ENCODE measurements at regions of chr20 and their contacts with region 1.

Region 1: GRCh38 chr20:17504898-17505635 is 26.1 kb downstream of the BFSP1 start:
- DNase-seq: peak; percentile 74
- H3K4me3 Mint-ChIP-seq: peak overlapping the region; percentile 74
- H3K27ac Mint-ChIP-seq: peak overlapping the region; percentile 65
- H3K4me1 Mint-ChIP-seq: peaks cover 17% of the 10 kb centered on the region
- H3K27me3 Mint-ChIP-seq: no peaks in the 10 kb centered on the region
- CTCF ChIP-seq: peak; percentile 50

Region 2: GRCh38 chr20:17137692-17138091 is 367.4 kb before region 1 on chr20:
- CTCF ChIA-PET with region 1: no interaction called
- POLR2A ChIA-PET with region 1: no interaction called
- intact Hi-C with region 1: no loop called
- DNase-seq: no peak
- H3K4me3 Mint-ChIP-seq: no peak overlapping the region
- H3K27ac Mint-ChIP-seq: no peak overlapping the region
- H3K4me1 Mint-ChIP-seq: no peaks in the 10 kb centered on the region
- H3K27me3 Mint-ChIP-seq: no peaks in the 10 kb centered on the region
- CTCF ChIP-seq: no peak

Region 3: DNA sequence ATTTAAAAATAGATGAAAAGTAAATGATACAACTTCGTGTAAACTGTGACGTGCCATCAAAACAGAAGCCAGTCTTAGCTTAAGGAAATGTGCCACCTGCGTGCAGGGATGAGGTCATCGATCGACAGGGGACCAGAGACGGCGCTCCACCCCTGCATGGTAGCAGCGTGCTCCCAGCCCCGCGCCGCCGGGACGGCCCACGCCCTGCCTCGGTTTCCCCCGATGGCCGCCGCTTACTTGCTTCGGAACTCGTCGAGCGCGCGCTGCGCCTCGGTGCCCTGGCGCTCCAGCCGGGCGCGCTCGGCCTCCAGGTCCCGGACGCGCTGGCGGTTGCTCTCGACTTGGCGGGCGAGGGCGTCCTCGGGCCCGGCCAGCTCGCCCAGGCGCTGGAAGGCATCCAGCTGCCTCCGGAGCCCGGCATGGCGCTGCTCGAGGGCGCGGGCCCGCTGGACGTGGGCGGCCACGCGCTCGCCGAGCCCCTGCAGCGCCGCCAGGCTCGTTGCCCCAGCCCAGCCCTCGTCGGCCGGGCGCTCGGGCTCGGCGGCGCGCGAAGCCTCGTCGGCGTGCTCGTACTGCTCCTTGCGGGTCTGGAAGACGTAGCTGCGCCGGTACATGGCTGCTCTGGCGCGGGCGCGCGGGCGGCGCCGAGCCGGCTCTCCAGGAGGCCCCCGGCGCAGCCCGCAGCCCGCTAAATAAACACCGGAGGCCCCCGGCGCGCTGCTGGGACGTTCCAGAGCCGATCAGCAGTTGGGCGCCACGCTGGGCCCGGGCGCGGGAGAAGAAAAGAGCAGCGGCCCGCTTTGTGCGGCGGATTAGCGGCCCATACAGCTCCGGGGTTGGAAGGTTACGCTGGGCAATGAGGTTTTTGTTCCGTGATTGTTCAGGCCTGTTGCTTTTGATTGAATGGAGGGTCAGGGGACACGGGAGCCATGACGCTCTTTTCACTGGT is 25.9 kb after region 1 on chr20 and contains the start of gene BFSP1:
- CTCF ChIA-PET with region 1: interaction called, 39 read pairs
- POLR2A ChIA-PET with region 1: interaction called, 7 read pairs
- intact Hi-C with region 1: loop called (anchors 2 kb)
- DNase-seq: peak; percentile 38
- H3K4me3 Mint-ChIP-seq: peak within 1 kb of the TSS; percentile 69
- H3K27ac Mint-ChIP-seq: no peak within 1 kb of the TSS
- H3K4me1 Mint-ChIP-seq: no peaks in the 10 kb centered on the region
- H3K27me3 Mint-ChIP-seq: no peaks in the 10 kb centered on the region
- CTCF ChIP-seq: no peak
- total RNA-seq, gene BFSP1: 3.5 and 3.9 TPM in 2 replicates

Region 4: GRCh38 chr20:17558154-17558940 is 53.3 kb after region 1 on chr20:
- CTCF ChIA-PET with region 1: interaction called, 11 read pairs
- POLR2A ChIA-PET with region 1: interaction called, 10 read pairs
- intact Hi-C with region 1: no loop called
- DNase-seq: peak; percentile 89
- H3K4me3 Mint-ChIP-seq: peak overlapping the region; percentile 64
- H3K27ac Mint-ChIP-seq: peak overlapping the region; percentile 97
- H3K4me1 Mint-ChIP-seq: peaks cover 36% of the 10 kb centered on the region
- H3K27me3 Mint-ChIP-seq: no peaks in the 10 kb centered on the region
- CTCF ChIP-seq: no peak

Region 5: DNA sequence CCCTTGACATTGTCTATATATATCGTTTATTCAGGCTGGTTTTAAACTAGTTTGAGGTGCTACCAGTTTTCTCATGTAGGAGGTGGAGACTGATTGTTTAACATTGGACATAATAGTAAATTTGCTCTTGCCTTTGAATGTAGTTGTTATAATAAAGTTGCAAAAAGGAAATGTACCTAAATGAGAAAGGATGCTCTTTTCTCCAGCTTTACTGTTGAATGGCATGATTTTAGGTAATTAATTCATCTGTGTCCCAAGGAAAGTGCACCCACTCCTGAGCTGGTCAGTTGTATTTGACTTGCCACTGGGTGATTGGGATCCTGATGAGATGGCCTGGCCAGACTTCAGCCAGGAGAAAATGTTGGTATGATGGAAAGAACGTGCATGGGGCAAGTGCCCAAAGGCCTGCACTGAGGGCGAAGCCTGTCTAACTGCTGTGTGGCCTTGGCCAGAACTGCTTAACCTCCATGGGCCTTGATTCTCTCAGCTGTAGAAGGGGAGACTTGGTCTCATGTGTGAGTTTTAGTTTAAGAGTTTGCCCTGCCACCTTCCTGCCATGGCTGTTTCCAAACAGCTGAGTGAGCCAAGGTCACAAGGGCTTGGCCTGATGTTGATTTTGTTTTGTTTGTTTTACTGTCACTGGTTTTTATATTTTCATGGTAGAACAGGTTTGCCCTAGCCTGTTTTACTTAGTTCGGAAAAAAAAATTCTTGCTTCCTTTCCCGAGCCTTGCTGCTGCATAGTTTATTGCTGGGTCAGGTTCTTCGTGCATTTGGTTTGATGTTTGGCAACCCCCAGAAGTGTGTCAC is 100.0 kb after region 1 on chr20:
- CTCF ChIA-PET with region 1: interaction called, 18 read pairs
- POLR2A ChIA-PET with region 1: no interaction called
- intact Hi-C with region 1: no loop called
- DNase-seq: no peak
- H3K4me3 Mint-ChIP-seq: no peak overlapping the region
- H3K27ac Mint-ChIP-seq: no peak overlapping the region
- H3K4me1 Mint-ChIP-seq: no peaks in the 10 kb centered on the region
- H3K27me3 Mint-ChIP-seq: no peaks in the 10 kb centered on the region
- CTCF ChIP-seq: no peak

Region 6: GRCh38 chr20:17648791-17649730 is 144.0 kb after region 1 on chr20:
- CTCF ChIA-PET with region 1: interaction called, 18 read pairs
- POLR2A ChIA-PET with region 1: no interaction called
- intact Hi-C with region 1: no loop called
- DNase-seq: no peak
- H3K4me3 Mint-ChIP-seq: no peak overlapping the region
- H3K27ac Mint-ChIP-seq: no peak overlapping the region
- H3K4me1 Mint-ChIP-seq: no peaks in the 10 kb centered on the region
- H3K27me3 Mint-ChIP-seq: no peaks in the 10 kb centered on the region
- CTCF ChIP-seq: peak; percentile 26

Region 7: GRCh38 chr20:17796091-17796563 is 291.1 kb after region 1 on chr20:
- CTCF ChIA-PET with region 1: no interaction called
- POLR2A ChIA-PET with region 1: no interaction called
- intact Hi-C with region 1: no loop called
- DNase-seq: peak; percentile 43
- H3K4me3 Mint-ChIP-seq: no peak overlapping the region
- H3K27ac Mint-ChIP-seq: no peak overlapping the region
- H3K4me1 Mint-ChIP-seq: peaks cover 5% of the 10 kb centered on the region
- H3K27me3 Mint-ChIP-seq: no peaks in the 10 kb centered on the region
- CTCF ChIP-seq: no peak

Region 8: GRCh38 chr20:17938871-17939619 is 434.0 kb after region 1 on chr20:
- CTCF ChIA-PET with region 1: interaction called, 6 read pairs
- POLR2A ChIA-PET with region 1: no interaction called
- intact Hi-C with region 1: loop called (anchors 2 kb)
- DNase-seq: peak; percentile 57
- H3K4me3 Mint-ChIP-seq: no peak overlapping the region
- H3K27ac Mint-ChIP-seq: no peak overlapping the region
- H3K4me1 Mint-ChIP-seq: no peaks in the 10 kb centered on the region
- H3K27me3 Mint-ChIP-seq: no peaks in the 10 kb centered on the region
- CTCF ChIP-seq: peak; percentile 54

Region 9: DNA sequence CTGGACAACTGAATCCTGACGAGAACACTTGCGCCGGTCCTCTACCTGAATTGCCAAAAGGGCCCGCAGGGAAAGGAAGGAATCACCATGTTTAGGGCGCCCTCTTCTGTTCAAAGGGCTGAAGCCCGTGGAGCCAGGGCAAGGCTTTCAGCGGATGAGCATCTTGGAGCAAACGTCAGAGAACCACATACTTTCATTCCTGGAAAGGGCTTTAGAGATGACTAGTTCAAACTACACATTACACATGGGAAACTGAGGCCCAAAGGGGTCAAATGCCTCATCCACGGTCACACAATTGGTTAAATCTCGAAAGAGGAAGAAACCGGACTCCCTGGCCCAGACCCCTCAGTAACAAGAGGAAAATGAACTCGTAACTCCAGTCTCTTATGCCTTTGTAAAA is 771.8 kb after region 1 on chr20:
- CTCF ChIA-PET with region 1: interaction called, 4 read pairs
- POLR2A ChIA-PET with region 1: no interaction called
- intact Hi-C with region 1: loop called (anchors 2 kb)
- DNase-seq: peak; percentile 85
- H3K4me3 Mint-ChIP-seq: no peak overlapping the region
- H3K27ac Mint-ChIP-seq: no peak overlapping the region
- H3K4me1 Mint-ChIP-seq: peaks cover 19% of the 10 kb centered on the region
- H3K27me3 Mint-ChIP-seq: peaks cover 12% of the 10 kb centered on the region
- CTCF ChIP-seq: peak; percentile 77

Measured in MCF 10A (cell line).